ENCODE measurements at regions of chr2 and their contacts with region 1.

Region 1: DNA sequence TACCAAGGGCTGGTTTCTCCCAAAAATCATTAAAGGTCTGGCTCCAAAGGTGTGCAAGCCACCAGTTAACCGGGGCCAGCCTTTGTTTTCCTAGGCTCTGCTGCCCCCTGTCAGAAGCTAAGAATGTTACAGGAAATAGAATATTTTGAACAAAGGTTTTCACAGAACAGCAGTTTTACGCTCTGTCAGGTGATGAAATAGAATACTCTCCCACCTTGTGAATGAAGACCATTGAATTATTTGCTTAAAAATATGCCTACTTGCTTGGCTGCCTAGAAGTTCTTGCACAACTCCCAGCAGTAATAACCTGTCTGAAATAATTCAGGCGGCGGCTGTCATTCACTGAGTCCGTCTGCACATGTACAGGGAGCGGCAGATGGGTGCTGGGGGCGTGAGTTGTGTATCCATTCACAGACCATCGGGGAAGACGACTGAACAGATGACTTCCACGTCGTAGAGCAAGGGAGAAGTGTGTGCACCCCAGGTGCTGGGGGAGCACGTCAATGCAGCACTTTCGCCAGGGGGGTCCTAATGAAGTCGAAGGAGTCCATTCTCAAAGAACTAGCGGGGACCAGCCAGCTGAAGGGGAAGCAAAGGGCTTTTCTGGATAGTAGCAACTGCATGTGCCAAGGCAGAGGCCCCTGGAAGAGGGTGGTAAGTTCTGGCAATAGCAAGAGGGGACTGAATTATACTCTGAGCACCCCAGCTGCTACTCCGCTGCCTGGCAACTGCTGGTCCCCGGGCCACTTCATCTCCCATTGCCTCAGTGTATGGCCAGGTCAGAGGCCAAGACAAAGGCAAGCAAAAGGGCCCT is 56.1 kb downstream of the SF3B1 start:
- DNase-seq: no peak
- ATAC-seq: peak; percentile 88
- H3K4me3 ChIP-seq: peak overlapping the region in 1 of 2 donors; percentile 0
- H3K27ac ChIP-seq: peak overlapping the region in 1 of 2 donors; percentile 61
- H3K4me1 ChIP-seq: no peaks in the 10 kb centered on the region
- H3K27me3 ChIP-seq: no peaks in the 10 kb centered on the region

Region 2: GRCh38 chr2:196887431-196887830 is 491.3 kb before region 1 on chr2:
- intact Hi-C with region 1: no loop called
- DNase-seq: no peak
- ATAC-seq: no peak
- H3K4me3 ChIP-seq: no peak overlapping the region
- H3K27ac ChIP-seq: no peak overlapping the region
- H3K4me1 ChIP-seq: no peaks in the 10 kb centered on the region
- H3K27me3 ChIP-seq: no peaks in the 10 kb centered on the region

Region 3: GRCh38 chr2:197011799-197012641 is 366.7 kb before region 1 on chr2:
- intact Hi-C with region 1: loop called (anchors 5 kb)
- DNase-seq: no peak
- ATAC-seq: no peak
- H3K4me3 ChIP-seq: no peak overlapping the region
- H3K27ac ChIP-seq: no peak overlapping the region
- H3K4me1 ChIP-seq: no peaks in the 10 kb centered on the region
- H3K27me3 ChIP-seq: no peaks in the 10 kb centered on the region

Region 4: DNA sequence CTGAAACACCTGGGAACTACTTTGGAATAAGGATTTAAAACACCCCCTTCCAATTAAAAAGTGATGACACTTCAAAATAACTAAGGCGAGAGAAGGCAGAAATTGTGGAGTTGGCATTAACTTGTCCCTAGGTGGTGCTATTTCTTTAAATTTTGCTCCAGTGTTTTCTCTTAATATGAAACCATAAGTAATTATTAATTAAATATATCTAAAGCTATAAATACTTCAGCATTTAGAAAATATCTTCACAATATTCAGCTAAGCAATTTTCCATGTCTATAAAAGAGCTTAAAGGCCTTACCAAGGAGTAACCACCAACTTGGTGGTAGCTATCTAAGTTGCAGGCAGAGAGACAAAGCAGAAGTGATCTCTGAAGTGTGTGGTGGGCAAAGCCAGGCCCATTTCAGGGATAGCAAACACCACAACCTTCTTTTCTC is 265.4 kb before region 1 on chr2:
- intact Hi-C with region 1: loop called (anchors 1 to 5 kb)
- DNase-seq: no peak
- ATAC-seq: no peak
- H3K4me3 ChIP-seq: no peak overlapping the region
- H3K27ac ChIP-seq: no peak overlapping the region
- H3K4me1 ChIP-seq: no peaks in the 10 kb centered on the region
- H3K27me3 ChIP-seq: no peaks in the 10 kb centered on the region

Region 5: DNA sequence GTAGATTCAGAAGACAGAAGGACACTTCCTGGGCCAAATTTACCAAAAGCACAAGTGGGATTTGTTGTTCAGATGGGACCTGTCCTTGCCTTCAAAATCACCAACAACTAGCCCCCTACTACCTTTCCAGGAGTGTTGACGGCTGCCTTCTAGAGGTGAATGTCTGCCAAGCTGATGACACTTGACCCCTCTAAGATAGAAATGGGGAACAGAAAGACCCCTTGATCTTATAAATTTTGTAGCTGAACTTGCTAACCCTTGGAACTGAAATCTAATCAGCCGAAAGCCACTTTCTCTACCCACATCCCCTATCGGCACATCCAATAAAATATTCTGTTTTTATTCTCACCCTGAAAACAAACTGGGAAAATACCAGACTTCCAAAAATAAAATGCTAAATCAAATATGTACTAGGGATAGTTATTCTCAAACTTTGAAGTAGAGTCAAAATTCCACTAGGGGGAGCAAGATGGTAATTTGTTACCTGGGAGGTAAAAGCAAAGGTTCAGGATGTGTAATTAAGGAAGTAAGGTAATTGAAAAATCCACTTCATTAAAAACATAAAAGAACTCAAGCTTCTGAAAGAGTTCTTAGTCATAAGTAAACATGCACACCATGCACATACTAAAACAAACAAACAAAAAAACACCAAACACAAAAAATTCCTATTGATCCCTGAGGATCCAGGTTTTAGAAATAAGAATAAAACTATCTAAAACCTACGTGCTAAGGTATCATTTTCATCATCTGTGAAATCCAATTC is 187.3 kb before region 1 on chr2:
- intact Hi-C with region 1: loop called (anchors 5 kb)
- DNase-seq: no peak
- ATAC-seq: no peak
- H3K4me3 ChIP-seq: no peak overlapping the region
- H3K27ac ChIP-seq: no peak overlapping the region
- H3K4me1 ChIP-seq: peaks cover 0 to 5% of the 10 kb centered on the region in 2 donors
- H3K27me3 ChIP-seq: no peaks in the 10 kb centered on the region

Region 6: GRCh38 chr2:197310271-197310985 is 68.3 kb before region 1 on chr2 and contains the start of gene ANKRD44:
- intact Hi-C with region 1: no loop called
- DNase-seq: peak; percentile 96 to 97
- ATAC-seq: peak; percentile 96
- H3K4me3 ChIP-seq: peak within 1 kb of the TSS; percentile 78 to 97
- H3K27ac ChIP-seq: peak within 1 kb of the TSS; percentile 43 to 95
- H3K4me1 ChIP-seq: peaks cover 2 to 9% of the 10 kb centered on the region in 2 donors
- H3K27me3 ChIP-seq: no peaks in the 10 kb centered on the region
- total RNA-seq, gene ANKRD44: 53.3 to 62.6 TPM